ENCODE measurements at regions of chr3 and their contacts with region 1.

Region 1: DNA sequence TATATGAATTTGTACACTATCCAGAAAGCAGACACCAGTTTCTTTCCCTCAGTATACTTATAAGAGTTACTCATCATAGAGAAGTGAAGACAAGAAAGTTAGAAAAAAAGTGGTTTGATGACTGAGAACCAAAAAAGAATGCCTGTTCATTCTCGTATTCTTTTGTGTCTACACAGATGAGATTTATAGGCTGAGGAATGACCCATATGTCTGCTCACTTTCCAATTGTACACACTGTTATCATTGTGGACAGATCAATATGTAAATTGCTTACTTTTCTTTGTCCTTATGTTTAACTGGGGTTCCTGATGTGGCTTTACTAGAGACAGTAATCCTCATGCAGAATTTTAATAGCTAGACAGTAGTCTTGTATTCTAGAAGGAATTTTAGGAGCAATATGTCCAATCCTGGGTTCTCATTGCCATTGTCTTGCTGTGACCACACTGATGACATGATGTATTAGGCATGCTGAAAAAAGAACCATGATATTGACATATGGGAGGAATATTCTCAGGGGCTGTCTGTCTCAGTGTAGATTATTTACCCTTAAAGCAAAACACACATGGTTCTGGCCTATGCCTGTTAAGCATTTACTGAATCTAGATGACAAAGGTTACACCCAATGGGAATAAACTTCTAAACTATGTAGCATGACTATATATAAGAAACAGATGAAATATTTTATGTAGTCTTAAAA is 669.7 kb downstream of the ROBO1 start:
- DNase-seq: no peak
- ATAC-seq: no peak
- H3K4me3 ChIP-seq: no peak overlapping the region
- H3K27ac ChIP-seq: no peak overlapping the region
- H3K4me1 ChIP-seq: no peaks in the 10 kb centered on the region
- H3K27me3 ChIP-seq: no peaks in the 10 kb centered on the region
- CTCF ChIP-seq: no peak
- EP300 ChIP-seq: no peak
- POLR2A ChIP-seq: no peak
- RAD21 ChIP-seq: no peak

Region 2: DNA sequence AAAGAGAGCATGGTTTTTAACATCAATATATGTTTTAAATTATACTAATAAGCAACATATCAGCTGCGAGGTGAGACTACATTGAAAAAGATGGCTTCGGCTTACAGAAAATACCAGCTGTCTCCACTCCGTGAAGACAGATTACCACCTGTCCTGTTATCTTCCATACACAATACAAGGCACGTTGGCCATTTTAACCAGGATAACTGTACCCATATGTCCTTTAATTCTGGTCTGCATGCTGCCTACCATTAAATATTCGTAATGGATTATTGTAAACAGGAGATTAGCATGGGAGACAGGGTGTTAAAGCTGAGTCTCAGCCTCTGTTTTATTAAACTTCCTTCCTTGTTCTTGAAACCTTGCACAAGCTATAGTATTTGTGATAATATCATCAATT is 185.9 kb before region 1 on chr3:
- CTCF ChIA-PET with region 1: no interaction called
- POLR2A ChIA-PET with region 1: no interaction called
- RAD21 ChIA-PET with region 1: no interaction called
- SMC1A ChIA-PET with region 1: no interaction called
- in situ Hi-C with region 1: no loop called
- intact Hi-C with region 1: no loop called
- DNase-seq: no peak
- ATAC-seq: no peak
- H3K4me3 ChIP-seq: no peak overlapping the region
- H3K27ac ChIP-seq: no peak overlapping the region
- H3K4me1 ChIP-seq: no peaks in the 10 kb centered on the region
- H3K27me3 ChIP-seq: no peaks in the 10 kb centered on the region
- CTCF ChIP-seq: no peak
- EP300 ChIP-seq: no peak
- POLR2A ChIP-seq: no peak
- RAD21 ChIP-seq: no peak

Region 3: GRCh38 chr3:79361748-79362378 is 263.8 kb after region 1 on chr3:
- CTCF ChIA-PET with region 1: interaction called, 16 read pairs
- POLR2A ChIA-PET with region 1: no interaction called
- RAD21 ChIA-PET with region 1: interaction called, 4 read pairs
- SMC1A ChIA-PET with region 1: interaction called, 9 read pairs
- in situ Hi-C with region 1: loop called (anchors 10 kb)
- intact Hi-C with region 1: no loop called
- DNase-seq: no peak
- ATAC-seq: peak; percentile 77
- H3K4me3 ChIP-seq: no peak overlapping the region
- H3K27ac ChIP-seq: no peak overlapping the region
- H3K4me1 ChIP-seq: no peaks in the 10 kb centered on the region
- H3K27me3 ChIP-seq: no peaks in the 10 kb centered on the region
- CTCF ChIP-seq: peak; percentile 62 to 70 (median 64)
- EP300 ChIP-seq: no peak
- POLR2A ChIP-seq: no peak
- RAD21 ChIP-seq: peak; percentile 73